A549 (cell line): ENCODE measurements at regions of chr20 and their contacts with region 1.

Region 1: DNA sequence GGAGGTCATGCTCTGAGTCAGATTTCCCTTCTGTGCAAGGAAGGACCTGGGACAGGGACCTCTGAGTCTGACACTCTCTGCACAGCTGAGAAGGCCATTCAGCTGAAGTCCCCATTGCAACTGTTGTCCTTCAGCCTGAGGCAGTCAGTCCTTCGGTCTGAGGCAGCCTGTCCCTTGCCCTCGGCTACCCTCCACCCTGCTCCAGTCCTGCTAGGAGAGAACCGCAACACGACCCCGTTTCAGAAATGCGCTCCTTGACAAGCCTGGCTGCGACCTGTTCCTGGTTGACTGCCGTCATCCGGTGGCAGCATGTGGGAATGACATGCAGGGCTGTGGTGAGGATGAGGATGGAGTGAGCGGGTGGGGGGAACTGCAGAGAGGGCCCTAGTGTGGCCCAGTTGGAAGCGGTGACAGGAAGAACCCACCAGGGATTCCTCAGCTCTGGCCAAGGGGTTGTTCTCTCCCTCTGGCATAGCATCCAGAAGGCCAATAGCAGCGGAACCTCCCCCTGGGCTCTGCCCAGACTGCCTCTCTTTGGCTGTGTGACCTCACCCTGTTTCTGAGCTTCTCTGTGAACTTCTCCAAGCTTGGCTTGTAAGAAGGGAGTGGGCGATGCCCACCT is 40.3 kb upstream of the ANGPT4 start:
- DNase-seq: peak; percentile 77 to 89
- ATAC-seq: peak; percentile 72 to 90
- H3K4me3 ChIP-seq: no peak overlapping the region
- H3K27ac ChIP-seq: no peak overlapping the region
- H3K4me1 ChIP-seq: no peaks in the 10 kb centered on the region
- CTCF ChIP-seq: peak; percentile 98
- EP300 ChIP-seq: no peak
- POLR2A ChIP-seq: no peak
- RAD21 ChIP-seq: peak; percentile 98 to 99

Region 2: DNA sequence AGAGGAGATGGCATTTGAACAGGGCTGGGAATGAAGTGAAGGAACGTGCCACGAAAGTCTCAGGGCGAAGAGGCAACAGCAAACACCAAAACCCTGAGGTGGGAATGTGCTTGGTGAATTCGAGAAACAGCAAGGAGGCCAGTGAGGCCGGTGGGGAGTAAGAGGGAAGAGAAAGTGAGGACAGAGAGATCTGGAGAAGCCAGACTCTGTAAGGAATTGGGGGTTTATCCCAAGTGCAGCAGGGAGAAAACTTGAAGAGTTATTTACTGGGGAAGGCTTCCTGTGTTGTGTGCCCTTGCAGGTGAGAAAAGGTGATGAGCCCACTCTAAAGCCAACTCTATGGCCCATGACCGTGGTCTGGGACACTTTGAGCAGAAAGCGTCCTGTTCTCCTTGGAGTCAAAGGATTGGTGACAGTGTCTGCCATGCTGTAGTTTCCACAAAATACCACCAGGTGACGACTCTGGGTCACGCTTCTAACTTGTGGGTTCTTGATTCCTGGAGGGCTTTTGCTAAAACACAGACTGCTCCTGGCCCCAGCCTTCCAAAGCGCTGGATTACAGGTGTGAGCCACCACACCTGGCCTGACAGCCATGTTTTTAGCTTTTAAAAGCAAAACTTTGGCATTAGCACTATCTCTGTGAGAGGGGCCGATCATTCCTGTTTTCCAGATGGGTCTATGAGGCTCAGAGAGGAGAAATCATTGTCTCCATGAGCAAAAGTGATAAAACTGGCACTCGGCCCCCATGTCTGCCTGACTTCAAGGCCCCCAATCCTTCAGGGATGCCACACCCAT is 394.8 kb before region 1 on chr20:
- CTCF ChIA-PET with region 1: interaction called, 11 read pairs
- POLR2A ChIA-PET with region 1: no interaction called
- DNase-seq: peak; percentile 80 to 87
- ATAC-seq: peak; percentile 78 to 93
- H3K4me3 ChIP-seq: no peak overlapping the region
- H3K27ac ChIP-seq: no peak overlapping the region
- H3K4me1 ChIP-seq: no peaks in the 10 kb centered on the region
- CTCF ChIP-seq: peak; percentile 98
- EP300 ChIP-seq: no peak
- POLR2A ChIP-seq: no peak
- RAD21 ChIP-seq: peak; percentile 95 to 97

Region 3: GRCh38 chr20:815914-816606 is 140.4 kb before region 1 on chr20:
- CTCF ChIA-PET with region 1: interaction called, 872 read pairs
- POLR2A ChIA-PET with region 1: interaction called, 3 read pairs
- DNase-seq: peak; percentile 76 to 84
- ATAC-seq: peak; percentile 48 to 76; a peak in 4 of 6 replicates
- H3K4me3 ChIP-seq: no peak overlapping the region
- H3K27ac ChIP-seq: no peak overlapping the region
- H3K4me1 ChIP-seq: no peaks in the 10 kb centered on the region
- CTCF ChIP-seq: peak; percentile 98
- EP300 ChIP-seq: no peak
- POLR2A ChIP-seq: no peak
- RAD21 ChIP-seq: peak; percentile 97 to 98

Region 4: GRCh38 chr20:878511-879307 is 77.7 kb before region 1 on chr20:
- CTCF ChIA-PET with region 1: interaction called, 22 read pairs
- POLR2A ChIA-PET with region 1: no interaction called
- DNase-seq: peak in 1 of 2 experiments; percentile 35
- ATAC-seq: no peak
- H3K4me3 ChIP-seq: no peak overlapping the region
- H3K27ac ChIP-seq: no peak overlapping the region
- H3K4me1 ChIP-seq: peaks cover 16% of the 10 kb centered on the region
- CTCF ChIP-seq: no peak
- EP300 ChIP-seq: no peak
- POLR2A ChIP-seq: no peak
- RAD21 ChIP-seq: no peak

Region 5: GRCh38 chr20:934186-934840 is 22.1 kb before region 1 on chr20:
- CTCF ChIA-PET with region 1: interaction called, 10 read pairs
- POLR2A ChIA-PET with region 1: no interaction called
- DNase-seq: no peak
- ATAC-seq: no peak
- H3K4me3 ChIP-seq: no peak overlapping the region
- H3K27ac ChIP-seq: no peak overlapping the region
- H3K4me1 ChIP-seq: no peaks in the 10 kb centered on the region
- CTCF ChIP-seq: no peak
- EP300 ChIP-seq: no peak
- POLR2A ChIP-seq: no peak
- RAD21 ChIP-seq: no peak

Region 6: DNA sequence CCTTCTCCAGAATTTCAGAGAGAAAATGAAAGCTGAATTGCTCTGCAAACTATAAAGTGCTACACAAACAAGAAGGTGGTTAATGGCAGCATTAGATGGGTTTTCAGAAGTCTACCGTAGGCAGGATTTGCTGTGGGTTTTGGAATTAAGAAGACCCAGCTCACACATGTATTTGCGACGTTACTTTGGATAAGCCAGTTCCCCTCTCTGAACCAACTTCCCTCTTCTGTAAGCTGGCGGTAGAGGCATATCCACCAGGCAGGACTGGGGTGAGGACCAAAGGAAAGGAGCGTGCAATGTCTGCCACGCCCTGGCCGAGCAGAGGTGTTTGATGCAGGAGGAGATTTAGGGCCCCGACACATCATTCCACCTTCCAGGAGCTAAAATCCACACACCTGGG is 38.7 kb after region 1 on chr20:
- CTCF ChIA-PET with region 1: interaction called, 12 read pairs
- POLR2A ChIA-PET with region 1: no interaction called
- DNase-seq: no peak
- ATAC-seq: no peak
- H3K4me3 ChIP-seq: no peak overlapping the region
- H3K27ac ChIP-seq: no peak overlapping the region
- H3K4me1 ChIP-seq: no peaks in the 10 kb centered on the region
- CTCF ChIP-seq: no peak
- EP300 ChIP-seq: no peak
- POLR2A ChIP-seq: no peak
- RAD21 ChIP-seq: no peak